Vagina (tissue), 2 donors: ENCODE measurements at regions of chrX and their contacts with region 1.

Region 1: DNA sequence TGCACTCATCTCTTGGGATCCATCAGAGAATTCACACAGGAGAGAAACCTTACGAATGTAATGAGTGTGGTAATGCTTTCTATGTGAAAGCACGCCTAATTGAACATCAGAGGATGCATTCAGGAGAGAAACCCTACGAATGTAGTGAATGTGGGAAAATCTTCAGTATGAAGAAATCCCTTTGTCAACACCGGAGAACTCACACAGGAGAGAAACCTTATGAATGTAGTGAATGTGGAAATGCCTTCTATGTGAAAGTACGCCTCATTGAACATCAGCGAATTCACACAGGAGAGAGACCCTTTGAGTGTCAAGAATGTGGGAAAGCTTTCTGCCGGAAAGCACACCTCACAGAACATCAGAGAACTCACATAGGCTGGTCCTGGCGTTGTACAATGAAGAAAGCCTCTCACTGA is 42.8 kb downstream of the ZNF157 start:
- DNase-seq: no peak
- H3K4me3 ChIP-seq: no peak overlapping the region
- H3K27ac ChIP-seq: no peak overlapping the region
- H3K4me1 ChIP-seq: no peaks in the 10 kb centered on the region
- H3K27me3 ChIP-seq: no peaks in the 10 kb centered on the region
- CTCF ChIP-seq: no peak
- POLR2A ChIP-seq: no peak

Region 2: DNA sequence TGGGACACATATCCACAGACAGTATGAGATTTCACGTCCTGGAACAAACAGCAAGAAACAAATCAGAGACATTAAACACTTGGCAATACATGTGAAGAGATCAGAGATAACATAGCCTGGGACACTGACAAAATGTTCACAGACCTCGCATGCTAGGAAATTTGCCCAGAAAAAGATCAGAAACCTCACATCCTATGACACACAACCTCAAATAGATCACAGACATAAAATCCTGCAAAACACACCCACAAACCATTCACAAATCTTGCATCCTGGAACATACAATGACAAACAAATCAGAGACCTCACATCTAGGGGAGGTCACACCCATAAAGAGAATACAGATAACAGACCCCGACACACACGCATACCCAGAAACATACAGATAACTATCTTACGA is 1301.4 kb after region 1 on chrX:
- intact Hi-C with region 1: loop called (anchors 5 kb)
- DNase-seq: no peak
- H3K4me3 ChIP-seq: no peak overlapping the region
- H3K27ac ChIP-seq: no peak overlapping the region
- H3K4me1 ChIP-seq: no peaks in the 10 kb centered on the region
- H3K27me3 ChIP-seq: no peaks in the 10 kb centered on the region
- CTCF ChIP-seq: no peak
- POLR2A ChIP-seq: no peak